ENCODE measurements at regions of chr19 and their contacts with region 1.

Region 1: DNA sequence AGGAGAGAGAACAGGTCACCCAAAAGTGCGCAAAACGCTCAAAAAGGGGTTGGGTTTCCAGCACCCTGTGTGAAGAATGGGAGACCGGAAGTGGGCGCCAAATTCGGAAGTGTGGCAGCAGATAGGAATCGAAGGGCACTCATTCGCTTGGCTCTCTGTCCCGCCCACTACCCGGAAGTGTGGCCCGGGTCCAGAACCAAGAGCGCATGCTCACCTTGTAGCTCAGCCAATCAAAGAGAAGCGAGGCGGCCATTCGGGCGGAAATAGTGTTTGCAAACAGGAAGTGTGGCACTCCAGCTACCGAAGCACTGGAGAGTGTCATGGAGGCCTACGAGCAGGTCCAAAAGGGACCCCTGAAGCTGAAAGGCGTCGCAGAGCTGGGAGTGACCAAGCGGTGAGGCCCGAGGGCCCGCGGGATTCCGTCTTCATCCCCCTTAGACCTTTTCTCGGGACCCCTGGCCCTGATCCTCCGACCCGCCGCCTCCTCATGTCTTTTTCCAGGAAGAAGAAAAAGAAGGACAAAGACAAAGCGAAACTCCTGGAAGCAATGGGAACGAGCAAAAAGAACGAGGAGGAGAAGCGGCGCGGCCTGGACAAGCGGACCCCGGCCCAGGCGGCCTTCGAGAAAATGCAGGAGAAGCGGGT is at the start of gene FAM32A:
- DNase-seq: peak; percentile 100
- H3K4me3 Mint-ChIP-seq: peak within 1 kb of the TSS; percentile 97
- H3K27ac Mint-ChIP-seq: peak within 1 kb of the TSS; percentile 89
- H3K4me1 Mint-ChIP-seq: peaks cover 37% of the 10 kb centered on the region
- H3K27me3 Mint-ChIP-seq: peaks cover 2% of the 10 kb centered on the region
- total RNA-seq, gene FAM32A: 66.0 to 70.8 TPM

Region 2: DNA sequence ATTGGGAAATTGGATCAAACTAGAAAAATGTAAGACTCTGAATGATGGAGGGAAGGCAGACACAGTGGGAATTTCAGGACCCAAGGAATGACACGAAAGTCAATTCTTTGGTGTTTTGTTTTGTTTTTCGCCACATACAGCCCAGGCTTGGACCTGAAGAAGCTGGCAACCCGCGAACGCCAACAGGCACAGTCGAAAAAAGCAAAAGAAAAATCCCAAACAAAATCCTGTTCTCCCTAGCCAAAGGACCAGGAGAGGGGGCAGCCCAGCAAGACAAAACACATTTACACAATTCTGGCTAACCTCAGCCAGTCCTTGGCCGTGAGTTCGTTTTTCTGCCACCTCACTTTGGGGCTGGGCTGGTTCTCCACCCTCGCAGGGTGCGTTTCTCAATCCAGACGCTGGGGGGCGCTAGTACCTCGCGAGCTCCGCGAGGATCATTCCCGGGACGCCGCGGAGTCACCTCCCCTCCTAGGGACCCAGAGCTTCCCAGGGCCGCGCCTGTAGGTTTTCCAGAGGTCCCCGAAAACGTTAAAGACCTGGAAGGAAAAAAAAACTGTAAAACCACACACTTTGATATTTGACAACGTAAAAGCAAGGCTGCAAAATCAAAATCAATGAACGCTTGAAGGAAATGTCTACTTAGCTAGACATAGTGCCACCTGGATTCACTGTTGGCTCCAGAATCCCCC is 143.8 kb before region 1 on chr19:
- CTCF ChIA-PET with region 1: interaction called, 31 read pairs
- POLR2A ChIA-PET with region 1: interaction called, 15 read pairs
- DNase-seq: peak; percentile 78
- H3K4me3 Mint-ChIP-seq: no peak overlapping the region
- H3K27ac Mint-ChIP-seq: no peak overlapping the region
- H3K4me1 Mint-ChIP-seq: peaks cover 19% of the 10 kb centered on the region
- H3K27me3 Mint-ChIP-seq: peaks cover 5% of the 10 kb centered on the region

Region 3: DNA sequence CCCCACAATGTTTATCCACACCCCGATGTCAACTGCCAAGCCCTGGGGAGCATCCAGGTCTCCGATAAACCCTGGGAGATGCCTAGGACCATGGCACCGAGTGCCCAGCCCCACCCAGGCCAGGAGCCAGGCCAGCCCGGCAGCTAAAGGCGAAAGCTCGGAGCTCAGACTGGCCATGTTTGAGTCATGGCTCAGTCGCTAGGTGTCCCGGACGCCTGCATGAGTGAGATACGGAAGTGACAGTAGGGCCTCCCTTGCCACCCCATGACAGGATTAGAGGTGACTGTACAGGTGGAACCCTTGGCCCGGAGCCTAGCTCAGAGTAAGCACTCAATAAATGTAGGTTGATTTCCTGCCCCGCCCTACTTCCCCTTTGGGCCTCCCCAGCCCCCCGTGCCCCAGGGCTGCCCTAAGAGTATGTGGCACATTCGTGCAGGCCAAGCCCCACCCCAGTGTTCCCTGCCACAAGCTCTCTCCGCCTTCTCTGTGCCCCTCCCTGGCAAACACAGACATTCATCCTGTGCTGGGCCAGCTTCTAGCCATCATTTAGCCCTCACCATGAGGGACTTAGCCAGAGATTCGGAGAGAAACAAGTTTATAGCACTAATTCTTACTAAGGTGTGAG is 114.8 kb before region 1 on chr19:
- CTCF ChIA-PET with region 1: interaction called, 17 read pairs
- POLR2A ChIA-PET with region 1: interaction called, 11 read pairs
- DNase-seq: peak; percentile 90
- H3K4me3 Mint-ChIP-seq: no peak overlapping the region
- H3K27ac Mint-ChIP-seq: no peak overlapping the region
- H3K4me1 Mint-ChIP-seq: peaks cover 53% of the 10 kb centered on the region
- H3K27me3 Mint-ChIP-seq: no peaks in the 10 kb centered on the region

Region 4: GRCh38 chr19:16111160-16111908 is 73.9 kb before region 1 on chr19 and contains the start of gene RAB8A:
- CTCF ChIA-PET with region 1: interaction called, 10 read pairs
- POLR2A ChIA-PET with region 1: interaction called, 11 read pairs
- DNase-seq: peak; percentile 98
- H3K4me3 Mint-ChIP-seq: peak within 1 kb of the TSS; percentile 99
- H3K27ac Mint-ChIP-seq: peak within 1 kb of the TSS; percentile 96
- H3K4me1 Mint-ChIP-seq: peaks cover 42% of the 10 kb centered on the region
- H3K27me3 Mint-ChIP-seq: no peaks in the 10 kb centered on the region
- total RNA-seq, gene RAB8A: 141 to 147 TPM

Region 5: GRCh38 chr19:16197622-16198369 is 12.6 kb after region 1 on chr19 and contains the start of gene AP1M1:
- CTCF ChIA-PET with region 1: interaction called, 25 read pairs
- POLR2A ChIA-PET with region 1: interaction called, 29 read pairs
- DNase-seq: peak; percentile 99
- H3K4me3 Mint-ChIP-seq: peak within 1 kb of the TSS; percentile 87
- H3K27ac Mint-ChIP-seq: peak within 1 kb of the TSS; percentile 95
- H3K4me1 Mint-ChIP-seq: peaks cover 55% of the 10 kb centered on the region
- H3K27me3 Mint-ChIP-seq: no peaks in the 10 kb centered on the region
- total RNA-seq, gene AP1M1: 131 to 151 TPM

Measured in activated CD4-positive, alpha-beta memory T cell treated with anti-CD3 and anti-CD28 coated beads, Interleukin-2, amount 10 ng/mL, durations not matched to agents 7 days and 5 days (primary cell).